IMR-90 (cell line): ENCODE measurements at regions of chr13 and their contacts with region 1.

Region 1: DNA sequence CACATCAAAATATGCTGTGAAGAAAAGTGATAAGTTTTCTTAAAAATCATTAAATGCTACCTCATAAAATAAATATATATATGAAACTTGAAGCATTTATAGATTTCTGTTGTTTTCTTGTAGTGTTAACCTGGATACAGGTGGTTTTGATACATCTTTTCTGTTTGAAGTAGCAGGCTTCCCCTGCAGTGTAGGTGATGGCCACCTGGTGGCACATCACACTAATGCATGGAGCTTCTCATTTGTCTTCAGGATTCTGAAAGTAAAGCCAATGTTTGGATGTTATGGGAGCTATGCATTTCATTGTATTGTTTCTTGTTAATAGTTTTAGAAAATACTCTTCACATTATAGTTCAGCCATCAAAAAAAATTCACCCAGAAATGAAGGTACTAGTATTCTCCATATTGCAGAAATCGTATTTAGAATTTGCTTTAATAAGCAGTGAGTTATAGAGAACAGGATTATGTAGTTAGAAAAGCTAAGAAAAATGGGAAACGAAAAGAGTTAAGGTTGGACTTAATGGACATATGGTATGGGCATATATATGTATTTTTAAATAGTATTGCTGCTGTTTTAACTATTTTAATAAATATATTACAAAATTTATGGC is 18.7 kb downstream of the GPR180 start:
- DNase-seq: peak; percentile 41
- ATAC-seq: peak; percentile 68
- H3K4me3 ChIP-seq: no peak overlapping the region
- H3K27ac ChIP-seq: no peak overlapping the region
- H3K4me1 ChIP-seq: no peaks in the 10 kb centered on the region
- H3K27me3 ChIP-seq: no peaks in the 10 kb centered on the region
- CTCF ChIP-seq: peak; percentile 58
- POLR2A ChIP-seq: no peak
- RAD21 ChIP-seq: peak; percentile 71

Region 2: GRCh38 chr13:94286581-94286980 is 333.8 kb before region 1 on chr13:
- CTCF ChIA-PET with region 1: no interaction called
- POLR2A ChIA-PET with region 1: no interaction called
- dilution Hi-C with region 1: no loop called
- in situ Hi-C with region 1: no loop called
- intact Hi-C with region 1: no loop called
- DNase-seq: no peak
- ATAC-seq: no peak
- H3K4me3 ChIP-seq: no peak overlapping the region
- H3K27ac ChIP-seq: no peak overlapping the region
- H3K4me1 ChIP-seq: no peaks in the 10 kb centered on the region
- H3K27me3 ChIP-seq: no peaks in the 10 kb centered on the region
- CTCF ChIP-seq: no peak
- POLR2A ChIP-seq: no peak
- RAD21 ChIP-seq: no peak

Region 3: DNA sequence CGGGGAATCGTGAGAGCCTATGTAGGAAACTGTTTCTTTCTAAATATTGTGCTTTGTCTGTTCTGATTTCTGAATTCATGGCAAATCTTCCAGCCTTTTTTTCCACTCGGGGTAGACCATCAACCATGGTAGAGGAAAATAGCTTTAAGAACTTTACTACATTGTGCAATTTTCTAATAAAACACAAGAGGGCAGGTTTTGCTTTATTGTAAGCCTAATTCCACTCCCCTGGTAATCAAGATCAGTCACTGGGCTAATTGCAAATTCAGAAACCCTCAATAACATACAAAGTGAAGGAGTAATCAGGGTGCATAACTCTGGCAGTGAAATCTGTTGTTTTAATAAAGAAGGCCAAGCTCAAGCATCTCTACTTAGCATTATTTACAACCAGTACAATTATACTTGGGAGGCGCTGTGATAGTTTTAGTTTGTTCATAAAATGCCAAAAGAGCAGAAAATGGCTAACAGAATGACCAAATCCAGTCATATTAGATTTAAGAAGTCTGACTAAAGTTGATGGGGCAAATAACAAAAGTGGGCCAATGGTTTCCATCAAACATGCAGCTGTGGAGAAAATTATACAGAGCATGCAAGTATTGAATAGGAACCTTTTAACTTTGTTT is 184.7 kb before region 1 on chr13:
- CTCF ChIA-PET with region 1: interaction called, 8 read pairs
- POLR2A ChIA-PET with region 1: interaction called, 3 read pairs
- dilution Hi-C with region 1: no loop called
- in situ Hi-C with region 1: no loop called
- intact Hi-C with region 1: loop called (anchors 1 kb)
- DNase-seq: peak; percentile 58
- ATAC-seq: peak; percentile 91
- H3K4me3 ChIP-seq: no peak overlapping the region
- H3K27ac ChIP-seq: no peak overlapping the region
- H3K4me1 ChIP-seq: no peaks in the 10 kb centered on the region
- H3K27me3 ChIP-seq: peaks cover 6% of the 10 kb centered on the region
- CTCF ChIP-seq: peak; percentile 63
- POLR2A ChIP-seq: no peak
- RAD21 ChIP-seq: peak; percentile 65

Region 4: GRCh38 chr13:94494021-94494420 is 126.4 kb before region 1 on chr13:
- CTCF ChIA-PET with region 1: no interaction called
- POLR2A ChIA-PET with region 1: no interaction called
- dilution Hi-C with region 1: no loop called
- in situ Hi-C with region 1: no loop called
- intact Hi-C with region 1: no loop called
- DNase-seq: no peak
- ATAC-seq: no peak
- H3K4me3 ChIP-seq: no peak overlapping the region
- H3K27ac ChIP-seq: no peak overlapping the region
- H3K4me1 ChIP-seq: no peaks in the 10 kb centered on the region
- H3K27me3 ChIP-seq: no peaks in the 10 kb centered on the region; the same call in 1 of the 2 replicates
- CTCF ChIP-seq: no peak
- POLR2A ChIP-seq: no peak
- RAD21 ChIP-seq: no peak

Region 5: DNA sequence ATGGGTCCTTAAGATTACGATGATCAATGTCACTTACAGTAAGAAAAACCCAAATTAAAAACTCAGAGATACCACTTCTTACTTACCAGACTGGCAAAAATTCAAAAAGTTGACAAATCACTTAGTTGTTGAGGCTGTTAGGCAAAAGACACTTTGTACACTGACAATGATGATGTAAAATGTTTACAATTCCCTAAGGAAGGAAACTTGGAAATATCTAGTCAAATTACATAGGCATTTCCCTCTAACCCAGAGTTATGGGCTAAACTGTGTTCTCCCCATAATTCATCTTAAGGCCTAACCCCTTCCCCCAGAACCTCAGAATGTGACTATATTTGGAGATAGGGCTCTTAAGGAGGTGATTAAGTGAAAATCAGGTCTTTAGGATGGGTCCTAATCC is 36.5 kb before region 1 on chr13:
- CTCF ChIA-PET with region 1: no interaction called
- POLR2A ChIA-PET with region 1: no interaction called
- dilution Hi-C with region 1: no loop called
- in situ Hi-C with region 1: no loop called
- intact Hi-C with region 1: no loop called
- DNase-seq: no peak
- ATAC-seq: no peak
- H3K4me3 ChIP-seq: no peak overlapping the region
- H3K27ac ChIP-seq: no peak overlapping the region
- H3K4me1 ChIP-seq: no peaks in the 10 kb centered on the region
- H3K27me3 ChIP-seq: no peaks in the 10 kb centered on the region
- CTCF ChIP-seq: no peak
- POLR2A ChIP-seq: no peak
- RAD21 ChIP-seq: no peak

Region 6: GRCh38 chr13:94710881-94711560 is 90.6 kb after region 1 on chr13:
- CTCF ChIA-PET with region 1: no interaction called
- POLR2A ChIA-PET with region 1: no interaction called
- dilution Hi-C with region 1: no loop called
- in situ Hi-C with region 1: no loop called
- intact Hi-C with region 1: loop called (anchors 5 kb)
- DNase-seq: no peak
- ATAC-seq: peak; percentile 74
- H3K4me3 ChIP-seq: no peak overlapping the region
- H3K27ac ChIP-seq: no peak overlapping the region
- H3K4me1 ChIP-seq: peaks cover 3% of the 10 kb centered on the region; the same call in 1 of the 2 replicates
- H3K27me3 ChIP-seq: peaks cover 82% of the 10 kb centered on the region
- CTCF ChIP-seq: 0 out of 2 replicates have a peak, but pooled peaks have one; percentile 20
- POLR2A ChIP-seq: no peak
- RAD21 ChIP-seq: no peak

Region 7: DNA sequence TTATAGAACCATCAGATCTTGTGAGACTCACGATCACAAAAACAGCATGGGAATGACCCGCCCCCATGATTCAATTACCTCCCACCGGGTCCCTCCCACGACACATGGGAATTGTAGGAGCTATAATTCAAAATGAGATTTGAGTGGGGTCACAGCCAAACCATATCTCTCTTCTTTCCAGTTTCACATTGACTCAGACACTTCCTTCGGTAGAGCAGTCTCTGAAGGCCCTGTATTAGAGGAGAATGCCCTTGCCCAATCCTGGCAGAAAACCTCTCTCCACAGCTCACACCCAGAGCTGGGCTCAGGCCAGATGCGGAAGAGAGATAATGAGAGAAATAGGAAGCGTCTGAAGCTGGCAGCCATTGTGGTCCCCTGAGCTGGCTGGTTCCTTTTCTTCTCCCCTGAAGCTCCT is 859.7 kb after region 1 on chr13:
- CTCF ChIA-PET with region 1: no interaction called
- POLR2A ChIA-PET with region 1: no interaction called
- dilution Hi-C with region 1: no loop called
- in situ Hi-C with region 1: no loop called
- intact Hi-C with region 1: loop called (anchors 5 kb)
- DNase-seq: no peak
- ATAC-seq: no peak
- H3K4me3 ChIP-seq: no peak overlapping the region
- H3K27ac ChIP-seq: no peak overlapping the region
- H3K4me1 ChIP-seq: no peaks in the 10 kb centered on the region
- H3K27me3 ChIP-seq: peaks cover 21% of the 10 kb centered on the region
- CTCF ChIP-seq: no peak
- POLR2A ChIP-seq: no peak
- RAD21 ChIP-seq: no peak